GM12878 (cell line): ENCODE measurements at regions of chr17 and their contacts with region 1.

Region 1: GRCh38 chr17:31517524-31517923 is 126.0 kb downstream of the RAB11FIP4 start:
- DNase-seq: no peak
- ATAC-seq: no peak
- H3K4me3 ChIP-seq: no peak overlapping the region
- H3K27ac ChIP-seq: no peak overlapping the region
- H3K4me1 ChIP-seq: no peaks in the 10 kb centered on the region
- H3K27me3 ChIP-seq: no peaks in the 10 kb centered on the region
- CTCF ChIP-seq: peak; percentile 30 to 43 (median 39); a peak in 4 of 6 replicates
- EP300 ChIP-seq: no peak
- POLR2A ChIP-seq: no peak
- RAD21 ChIP-seq: peak; percentile 66

Region 2: DNA sequence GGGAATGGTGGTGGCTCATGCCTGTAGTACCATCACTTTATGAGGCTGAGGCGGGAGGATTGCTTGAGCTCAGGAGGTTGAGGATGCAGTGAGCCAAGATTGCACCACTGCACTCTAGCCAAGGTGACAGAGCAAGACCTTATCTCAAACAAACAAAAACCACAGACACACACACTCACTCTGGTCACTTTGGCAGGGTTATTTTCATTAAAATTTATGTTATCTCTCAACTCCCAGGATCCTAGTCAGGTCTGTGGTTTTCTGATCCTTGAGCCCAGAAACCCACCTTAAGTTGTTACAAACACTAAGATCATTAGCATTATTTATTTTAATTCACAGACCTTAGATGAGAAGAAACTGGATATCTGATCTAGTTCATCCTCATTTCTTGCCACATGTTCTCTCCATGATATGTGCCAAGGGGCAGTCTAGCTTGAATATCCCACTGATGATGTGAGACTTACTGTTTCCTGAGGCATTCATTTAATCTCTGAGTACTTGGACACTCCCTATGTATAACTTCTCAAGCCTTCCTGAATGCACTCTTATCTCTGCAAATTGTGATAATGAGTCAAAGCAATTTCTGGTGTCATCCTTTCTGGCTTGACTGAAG is 1960.3 kb before region 1 on chr17:
- CTCF ChIA-PET with region 1: no interaction called
- POLR2A ChIA-PET with region 1: no interaction called
- RAD21 ChIA-PET with region 1: no interaction called
- SMC1A ChIA-PET with region 1: no interaction called
- in situ Hi-C with region 1: no loop called
- intact Hi-C with region 1: no loop called
- DNase-seq: no peak
- ATAC-seq: peak; percentile 20; the same call in 2 of the 3 replicates
- H3K4me3 ChIP-seq: no peak overlapping the region
- H3K27ac ChIP-seq: no peak overlapping the region
- H3K4me1 ChIP-seq: peaks cover 44% of the 10 kb centered on the region
- H3K27me3 ChIP-seq: no peaks in the 10 kb centered on the region
- CTCF ChIP-seq: no peak
- EP300 ChIP-seq: no peak
- POLR2A ChIP-seq: no peak
- RAD21 ChIP-seq: no peak

Region 3: DNA sequence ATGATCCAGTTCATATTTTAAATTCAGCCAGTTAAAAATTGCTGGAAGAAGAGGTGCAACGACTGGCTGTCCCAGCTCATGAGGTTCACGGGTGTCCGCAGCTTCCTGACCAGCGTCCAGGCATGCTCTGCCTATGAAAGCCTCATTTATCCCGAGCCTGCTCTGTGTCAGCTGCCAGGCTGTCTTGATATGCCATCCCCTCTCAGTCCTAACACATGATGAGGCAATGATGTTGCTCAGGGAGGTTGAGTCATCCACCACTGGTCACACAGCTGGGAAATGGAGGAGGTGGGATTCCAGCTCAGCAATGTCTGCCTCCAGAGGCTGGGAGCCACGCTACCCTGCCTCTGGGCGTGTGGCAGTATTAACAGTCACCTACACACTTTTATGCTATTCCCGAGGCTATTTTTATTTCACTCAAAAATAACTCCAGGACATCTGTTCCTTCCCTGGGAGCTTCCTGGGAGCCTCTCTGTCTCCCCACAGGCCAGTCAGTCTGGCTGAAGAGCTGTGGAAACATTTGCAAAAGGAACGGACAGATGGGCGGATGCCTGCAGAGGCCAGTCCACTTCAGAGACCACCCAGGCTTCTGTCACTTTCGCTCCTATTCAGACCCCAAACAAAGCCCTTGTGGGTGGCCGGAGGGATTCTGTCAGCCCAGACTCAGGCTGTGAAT is 103.5 kb before region 1 on chr17:
- CTCF ChIA-PET with region 1: no interaction called
- POLR2A ChIA-PET with region 1: no interaction called
- RAD21 ChIA-PET with region 1: no interaction called
- SMC1A ChIA-PET with region 1: no interaction called
- in situ Hi-C with region 1: no loop called
- intact Hi-C with region 1: no loop called
- DNase-seq: no peak
- ATAC-seq: no peak
- H3K4me3 ChIP-seq: no peak overlapping the region
- H3K27ac ChIP-seq: no peak overlapping the region
- H3K4me1 ChIP-seq: no peaks in the 10 kb centered on the region
- H3K27me3 ChIP-seq: no peaks in the 10 kb centered on the region
- CTCF ChIP-seq: no peak
- EP300 ChIP-seq: no peak
- POLR2A ChIP-seq: no peak
- RAD21 ChIP-seq: no peak

Region 4: GRCh38 chr17:31444026-31444425 is 73.5 kb before region 1 on chr17:
- CTCF ChIA-PET with region 1: interaction called, 95 read pairs
- POLR2A ChIA-PET with region 1: no interaction called
- RAD21 ChIA-PET with region 1: interaction called, 64 read pairs
- SMC1A ChIA-PET with region 1: interaction called, 81 read pairs
- in situ Hi-C with region 1: no loop called
- intact Hi-C with region 1: no loop called
- DNase-seq: no peak
- ATAC-seq: no peak
- H3K4me3 ChIP-seq: no peak overlapping the region
- H3K27ac ChIP-seq: no peak overlapping the region
- H3K4me1 ChIP-seq: no peaks in the 10 kb centered on the region
- H3K27me3 ChIP-seq: no peaks in the 10 kb centered on the region
- CTCF ChIP-seq: no peak
- EP300 ChIP-seq: no peak
- POLR2A ChIP-seq: no peak
- RAD21 ChIP-seq: no peak

Region 5: GRCh38 chr17:31549525-31550388 is 32.2 kb after region 1 on chr17:
- CTCF ChIA-PET with region 1: no interaction called
- POLR2A ChIA-PET with region 1: no interaction called
- RAD21 ChIA-PET with region 1: no interaction called
- SMC1A ChIA-PET with region 1: no interaction called
- in situ Hi-C with region 1: no loop called
- intact Hi-C with region 1: no loop called
- DNase-seq: peak; percentile 75
- ATAC-seq: peak; percentile 89
- H3K4me3 ChIP-seq: peak overlapping the region; percentile 91
- H3K27ac ChIP-seq: peak overlapping the region; percentile 78
- H3K4me1 ChIP-seq: no peaks in the 10 kb centered on the region
- H3K27me3 ChIP-seq: peaks cover 0 to 2% of the 10 kb centered on the region in 2 experiments; a peak in 1 of 4 replicates
- CTCF ChIP-seq: no peak
- EP300 ChIP-seq: no peak
- POLR2A ChIP-seq: peak; percentile 83
- RAD21 ChIP-seq: no peak